GM23248 (cell line): ENCODE measurements at regions of chrX and their contacts with region 1.

Region 1: DNA sequence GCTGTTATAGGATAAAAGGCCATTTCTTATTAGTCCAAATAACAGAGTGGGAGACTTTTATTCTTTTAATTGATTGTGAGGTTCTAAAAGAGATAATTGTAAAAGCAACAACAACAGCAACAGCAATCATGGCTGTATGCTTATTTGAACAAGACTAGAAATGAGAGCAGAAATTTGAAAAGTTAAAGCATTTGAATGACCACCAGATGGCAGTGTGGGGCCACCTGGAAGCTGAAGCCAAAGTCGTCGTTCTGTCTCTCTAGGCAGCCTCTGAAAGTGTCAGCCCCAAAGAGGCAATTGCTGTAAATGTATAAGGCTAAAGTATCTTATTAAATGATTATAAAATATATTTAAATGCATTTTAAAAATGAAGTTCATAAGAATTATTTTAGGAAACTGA is 42.2 kb downstream of the SH2D1A start:
- DNase-seq: peak; percentile 58
- H3K4me3 ChIP-seq: no peak overlapping the region
- H3K27ac ChIP-seq: no peak overlapping the region
- H3K4me1 ChIP-seq: no peaks in the 10 kb centered on the region
- H3K27me3 ChIP-seq: no peaks in the 10 kb centered on the region

Region 2: DNA sequence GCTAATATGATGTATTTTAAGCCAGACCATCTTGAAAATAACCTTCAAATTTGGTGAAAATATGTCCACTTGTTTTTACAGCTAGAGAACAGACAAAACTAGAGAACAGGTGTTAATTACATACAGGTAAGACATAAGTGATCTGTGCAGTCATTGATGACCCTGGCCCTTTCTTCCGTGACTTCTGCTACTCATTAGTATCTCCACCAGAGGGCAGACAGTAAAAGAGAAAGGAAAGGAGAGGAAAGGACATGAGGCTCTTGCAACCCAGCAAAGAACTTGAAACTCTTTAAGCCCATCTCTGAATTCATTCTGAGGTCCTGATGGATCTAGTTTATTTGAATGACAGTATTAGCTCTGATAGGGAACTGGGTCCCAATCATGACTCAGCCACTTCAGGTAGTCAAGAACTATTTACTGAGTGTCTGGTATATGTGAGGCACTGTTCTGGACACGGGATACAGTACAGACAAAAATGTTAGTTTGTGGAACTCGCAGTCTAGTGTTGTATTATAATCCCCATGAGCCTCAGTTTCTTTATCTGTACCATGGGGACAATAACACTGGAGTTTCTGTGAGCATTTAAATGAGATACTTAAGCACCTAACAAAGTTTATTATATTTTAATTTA is 177.1 kb before region 1 on chrX:
- in situ Hi-C with region 1: loop called (anchors 10 kb)
- DNase-seq: peak; percentile 48
- H3K4me3 ChIP-seq: no peak overlapping the region
- H3K27ac ChIP-seq: no peak overlapping the region
- H3K4me1 ChIP-seq: no peaks in the 10 kb centered on the region
- H3K27me3 ChIP-seq: no peaks in the 10 kb centered on the region

Region 3: DNA sequence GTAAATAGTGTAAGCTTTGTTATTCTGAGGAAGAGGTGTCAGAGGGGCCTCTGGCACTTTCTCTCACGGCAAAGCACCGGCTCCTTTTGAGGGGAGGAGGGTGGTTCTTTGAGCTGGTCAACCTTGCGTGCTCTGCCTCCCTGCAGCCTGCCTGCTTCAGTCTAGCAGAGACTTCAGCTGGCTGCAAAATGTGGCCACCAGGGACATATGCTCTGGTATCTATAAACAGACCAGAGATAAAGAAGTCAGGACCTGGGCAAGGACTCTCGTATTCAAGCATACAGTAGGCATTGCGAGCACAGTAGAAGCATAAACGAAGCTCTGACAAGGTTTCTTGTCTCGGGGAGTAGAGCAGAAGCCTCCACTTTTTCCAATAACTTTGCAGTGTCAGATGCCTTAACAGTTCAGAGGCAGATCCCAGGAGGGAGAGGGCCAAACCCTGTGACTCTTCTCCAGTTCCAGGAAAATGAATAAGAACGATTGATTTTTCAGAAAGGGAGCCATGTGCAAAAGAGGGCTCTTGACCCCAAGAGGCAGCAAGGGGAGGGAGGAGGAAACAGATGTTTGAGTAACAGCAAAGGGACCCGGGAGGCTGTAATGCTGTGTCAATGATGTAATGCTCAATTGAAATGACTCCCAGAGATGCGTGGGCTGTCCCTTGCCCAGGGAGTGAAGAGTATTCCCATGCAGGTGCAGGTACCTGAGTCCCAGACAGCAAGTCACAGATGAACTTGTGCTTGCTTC is 114.0 kb before region 1 on chrX:
- in situ Hi-C with region 1: loop called (anchors 25 kb)
- DNase-seq: no peak
- H3K4me3 ChIP-seq: no peak overlapping the region
- H3K27ac ChIP-seq: no peak overlapping the region
- H3K4me1 ChIP-seq: no peaks in the 10 kb centered on the region
- H3K27me3 ChIP-seq: no peaks in the 10 kb centered on the region